A673 (cell line): ENCODE measurements at regions of chr6 and their contacts with region 1.

Region 1: GRCh38 chr6:94478133-94479005 is 1059.0 kb upstream of the EPHA7 start:
- DNase-seq: peak; percentile 94
- H3K4me3 ChIP-seq: no peak overlapping the region
- H3K27ac ChIP-seq: peak overlapping the region; percentile 25
- H3K4me1 ChIP-seq: peaks cover 19% of the 10 kb centered on the region
- H3K27me3 ChIP-seq: no peaks in the 10 kb centered on the region
- CTCF ChIP-seq: no peak

Region 2: GRCh38 chr6:94065707-94066337 is 412.5 kb before region 1 on chr6:
- CTCF ChIA-PET with region 1: no interaction called
- POLR2A ChIA-PET with region 1: no interaction called
- intact Hi-C with region 1: loop called (anchors 5 kb)
- DNase-seq: peak; percentile 88
- H3K4me3 ChIP-seq: no peak overlapping the region
- H3K27ac ChIP-seq: no peak overlapping the region
- H3K4me1 ChIP-seq: peaks cover 16% of the 10 kb centered on the region
- H3K27me3 ChIP-seq: no peaks in the 10 kb centered on the region
- CTCF ChIP-seq: no peak

Region 3: DNA sequence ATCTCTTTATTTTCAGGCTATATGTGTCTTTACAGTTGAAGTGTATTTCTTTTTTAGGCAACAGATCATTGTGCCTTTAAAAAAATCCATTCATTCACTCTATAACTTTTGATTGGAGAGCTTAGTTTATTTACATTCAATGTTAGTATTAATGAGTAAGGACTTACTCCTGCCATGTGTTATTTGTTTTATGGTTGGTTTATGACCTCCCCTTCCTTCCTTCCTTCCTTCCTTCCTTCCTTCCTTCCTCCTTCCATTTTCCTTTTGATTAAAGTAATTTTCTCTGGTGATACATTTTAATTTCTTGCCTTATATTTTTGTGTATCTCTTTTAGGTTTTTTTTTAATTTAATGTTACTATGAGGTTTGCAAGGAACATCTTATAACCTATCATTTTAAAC is 53.7 kb before region 1 on chr6:
- CTCF ChIA-PET with region 1: no interaction called
- POLR2A ChIA-PET with region 1: no interaction called
- intact Hi-C with region 1: loop called (anchors 2 kb)
- DNase-seq: peak; percentile 80
- H3K4me3 ChIP-seq: no peak overlapping the region
- H3K27ac ChIP-seq: peak overlapping the region; percentile 77
- H3K4me1 ChIP-seq: peaks cover 9% of the 10 kb centered on the region
- H3K27me3 ChIP-seq: no peaks in the 10 kb centered on the region
- CTCF ChIP-seq: no peak